ENCODE measurements at regions of chr5 and their contacts with region 1.

Region 1: DNA sequence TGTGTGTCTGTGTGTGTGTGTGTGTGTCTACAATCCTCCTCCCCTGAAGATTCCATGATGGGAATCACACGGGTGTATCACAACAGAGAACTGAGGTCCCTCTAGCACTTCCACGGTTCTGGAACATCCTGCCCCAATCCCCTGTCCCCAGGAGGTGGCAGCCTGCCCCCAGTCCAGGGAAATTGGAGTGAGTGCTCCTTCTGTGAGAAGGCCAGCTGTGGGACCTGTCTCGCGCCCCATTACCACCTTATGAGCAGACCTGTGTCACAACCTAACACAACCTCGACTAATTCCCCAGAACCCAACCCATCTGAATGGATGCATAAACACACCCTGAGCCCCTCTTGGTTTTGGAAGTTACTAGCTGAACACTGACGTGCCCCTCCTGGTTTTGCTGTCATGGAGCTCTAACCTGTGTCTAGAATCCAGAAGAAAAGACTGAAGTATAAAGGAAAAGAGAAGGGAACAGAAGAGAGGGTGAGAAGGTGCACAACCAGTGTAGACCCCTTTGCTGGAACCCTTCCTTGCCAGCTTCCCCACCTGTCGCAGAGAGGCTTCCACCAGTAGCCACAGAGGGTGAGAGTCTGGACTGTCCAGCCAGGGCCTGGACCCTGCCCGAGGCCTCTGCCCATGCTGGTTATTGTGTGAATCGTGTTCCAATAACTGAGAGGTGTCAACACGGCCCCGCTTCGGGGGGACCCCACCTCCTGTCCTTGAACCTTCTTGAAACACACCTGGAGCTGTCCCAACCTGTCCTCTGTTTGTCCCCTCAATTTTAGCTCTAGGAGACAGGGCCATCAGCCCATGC is 3.4 kb downstream of the BTNL9 start:
- DNase-seq: no peak
- ATAC-seq: peak; percentile 45; the same call in 2 of the 3 replicates
- H3K4me3 ChIP-seq: no peak overlapping the region
- H3K27ac ChIP-seq: no peak overlapping the region
- H3K4me1 ChIP-seq: no peaks in the 10 kb centered on the region
- H3K27me3 ChIP-seq: no peaks in the 10 kb centered on the region
- CTCF ChIP-seq: peak in 2 of 3 experiments; percentile 36 to 48; a peak in 4 of 6 replicates
- EP300 ChIP-seq: no peak
- POLR2A ChIP-seq: no peak
- RAD21 ChIP-seq: peak; percentile 31; the same call in 1 of the 2 replicates

Region 2: DNA sequence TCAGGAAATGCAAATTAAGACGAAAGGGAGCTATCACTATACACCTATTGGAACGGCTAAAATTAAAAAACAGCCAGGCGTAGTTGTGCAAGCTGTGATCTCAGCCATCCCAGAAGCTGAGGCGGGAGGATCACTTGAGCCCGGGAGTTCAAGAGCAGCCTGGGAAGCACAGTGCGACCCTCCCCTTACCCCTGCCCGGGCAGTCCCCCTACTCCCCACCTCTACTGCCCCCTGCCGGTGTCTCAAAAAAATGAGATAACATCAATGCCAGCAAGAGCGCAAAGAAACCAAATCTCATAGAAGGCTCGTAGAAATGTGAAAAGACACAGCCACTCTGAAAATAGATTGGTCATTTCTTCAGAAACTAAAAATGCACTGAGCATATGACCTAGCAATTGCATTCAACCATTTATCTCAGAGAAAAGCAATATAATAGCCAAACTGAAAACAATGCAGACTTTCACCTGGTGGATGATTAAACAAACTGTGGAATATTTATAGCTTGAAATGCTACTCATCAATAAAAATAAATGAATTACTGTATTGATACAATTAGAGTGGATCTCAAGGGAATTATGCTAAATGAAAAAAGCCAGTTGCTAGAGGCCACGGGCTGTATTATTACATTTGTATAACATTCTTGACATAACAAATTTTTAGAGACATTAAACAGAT is 124.5 kb after region 1 on chr5:
- CTCF ChIA-PET with region 1: interaction called, 12 read pairs
- POLR2A ChIA-PET with region 1: no interaction called
- RAD21 ChIA-PET with region 1: interaction called, 7 read pairs
- SMC1A ChIA-PET with region 1: no interaction called
- in situ Hi-C with region 1: no loop called
- intact Hi-C with region 1: no loop called
- DNase-seq: no peak
- ATAC-seq: peak; percentile 43
- H3K4me3 ChIP-seq: no peak overlapping the region
- H3K27ac ChIP-seq: no peak overlapping the region
- H3K4me1 ChIP-seq: peaks cover 32% of the 10 kb centered on the region
- H3K27me3 ChIP-seq: no peaks in the 10 kb centered on the region
- CTCF ChIP-seq: peak; percentile 54 to 61 (median 54)
- EP300 ChIP-seq: no peak
- POLR2A ChIP-seq: no peak
- RAD21 ChIP-seq: peak; percentile 26; the same call in 1 of the 2 replicates